ENCODE measurements at regions of chr7 and their contacts with region 1.

Region 1: GRCh38 chr7:25028370-25029021 is 48.5 kb upstream of the OSBPL3 start:
- DNase-seq: peak; percentile 66 to 99
- H3K4me3 ChIP-seq: peak overlapping the region; percentile 2; the same call in 1 of the 2 replicates
- H3K27ac ChIP-seq: peak overlapping the region; percentile 87
- H3K4me1 ChIP-seq: peaks cover 88% of the 10 kb centered on the region
- H3K27me3 ChIP-seq: no peaks in the 10 kb centered on the region
- CTCF ChIP-seq: no peak

Region 2: GRCh38 chr7:24819916-24820689 is 208.4 kb before region 1 on chr7:
- CTCF ChIA-PET with region 1: interaction called, 11 read pairs
- POLR2A ChIA-PET with region 1: interaction called, 4 read pairs
- intact Hi-C with region 1: loop called (anchors 1 kb)
- DNase-seq: peak; percentile 77 to 81
- H3K4me3 ChIP-seq: peak overlapping the region; percentile 22; the same call in 1 of the 2 replicates
- H3K27ac ChIP-seq: peak overlapping the region; percentile 97
- H3K4me1 ChIP-seq: peaks cover 47% of the 10 kb centered on the region
- H3K27me3 ChIP-seq: no peaks in the 10 kb centered on the region
- CTCF ChIP-seq: peak; percentile 99

Region 3: GRCh38 chr7:24907311-24907886 is 121.1 kb before region 1 on chr7:
- CTCF ChIA-PET with region 1: no interaction called
- POLR2A ChIA-PET with region 1: no interaction called
- intact Hi-C with region 1: loop called (anchors 2 kb)
- DNase-seq: peak; percentile 47 to 88
- H3K4me3 ChIP-seq: peak overlapping the region; percentile 21
- H3K27ac ChIP-seq: peak overlapping the region; percentile 86
- H3K4me1 ChIP-seq: peaks cover 58% of the 10 kb centered on the region
- H3K27me3 ChIP-seq: no peaks in the 10 kb centered on the region
- CTCF ChIP-seq: no peak

Region 4: DNA sequence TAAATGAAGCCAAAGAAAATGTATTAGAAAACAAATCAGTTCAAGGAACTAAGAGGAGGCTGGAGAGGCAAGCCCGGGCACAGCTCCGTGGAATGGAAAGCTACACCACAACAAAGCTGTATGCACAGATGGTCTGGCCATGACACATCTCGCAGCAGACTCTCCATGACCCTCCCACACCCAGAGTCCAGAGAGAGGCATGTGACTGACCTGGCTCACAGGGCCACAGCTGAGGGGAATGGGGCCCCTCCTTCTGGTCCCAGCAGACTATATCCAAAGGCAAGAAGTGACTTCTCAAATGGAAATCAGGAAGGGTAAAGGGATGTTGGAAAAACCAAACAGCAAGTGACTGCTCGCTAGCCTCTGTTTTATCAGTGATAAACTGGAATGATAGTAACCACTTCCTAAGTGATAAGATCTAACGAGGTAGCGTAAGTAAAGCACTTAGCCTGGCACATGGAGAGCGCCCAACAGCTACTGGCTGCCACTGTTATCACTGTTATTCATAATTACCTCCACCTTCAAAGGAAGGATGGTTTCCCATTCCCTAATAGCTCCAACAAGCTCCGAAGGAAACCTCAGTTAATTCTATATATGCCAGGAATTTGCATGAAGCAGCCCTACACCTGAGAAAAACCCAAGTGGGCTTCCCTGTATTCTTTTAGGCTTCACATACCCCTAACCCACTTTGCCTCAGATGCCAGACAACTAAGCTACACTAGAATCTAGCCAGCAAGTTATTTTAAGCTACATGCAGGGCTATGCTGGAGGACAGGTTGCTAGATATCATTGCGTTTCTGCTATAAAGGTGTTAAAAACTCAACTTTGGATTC is 56.9 kb before region 1 on chr7:
- CTCF ChIA-PET with region 1: no interaction called
- POLR2A ChIA-PET with region 1: interaction called, 3 read pairs
- intact Hi-C with region 1: loop called (anchors 2 kb)
- DNase-seq: peak; percentile 76 to 85
- H3K4me3 ChIP-seq: no peak overlapping the region
- H3K27ac ChIP-seq: peak overlapping the region; percentile 10; the same call in 1 of the 2 replicates
- H3K4me1 ChIP-seq: peaks cover 57% of the 10 kb centered on the region
- H3K27me3 ChIP-seq: no peaks in the 10 kb centered on the region
- CTCF ChIP-seq: no peak

Region 5: GRCh38 chr7:25069900-25070443 is 41.5 kb after region 1 on chr7:
- CTCF ChIA-PET with region 1: interaction called, 6 read pairs
- POLR2A ChIA-PET with region 1: interaction called, 10 read pairs
- intact Hi-C with region 1: loop called (anchors 1 kb)
- DNase-seq: peak; percentile 67 to 76
- H3K4me3 ChIP-seq: no peak overlapping the region
- H3K27ac ChIP-seq: no peak overlapping the region
- H3K4me1 ChIP-seq: peaks cover 5% of the 10 kb centered on the region
- H3K27me3 ChIP-seq: no peaks in the 10 kb centered on the region
- CTCF ChIP-seq: peak; percentile 96

Region 6: DNA sequence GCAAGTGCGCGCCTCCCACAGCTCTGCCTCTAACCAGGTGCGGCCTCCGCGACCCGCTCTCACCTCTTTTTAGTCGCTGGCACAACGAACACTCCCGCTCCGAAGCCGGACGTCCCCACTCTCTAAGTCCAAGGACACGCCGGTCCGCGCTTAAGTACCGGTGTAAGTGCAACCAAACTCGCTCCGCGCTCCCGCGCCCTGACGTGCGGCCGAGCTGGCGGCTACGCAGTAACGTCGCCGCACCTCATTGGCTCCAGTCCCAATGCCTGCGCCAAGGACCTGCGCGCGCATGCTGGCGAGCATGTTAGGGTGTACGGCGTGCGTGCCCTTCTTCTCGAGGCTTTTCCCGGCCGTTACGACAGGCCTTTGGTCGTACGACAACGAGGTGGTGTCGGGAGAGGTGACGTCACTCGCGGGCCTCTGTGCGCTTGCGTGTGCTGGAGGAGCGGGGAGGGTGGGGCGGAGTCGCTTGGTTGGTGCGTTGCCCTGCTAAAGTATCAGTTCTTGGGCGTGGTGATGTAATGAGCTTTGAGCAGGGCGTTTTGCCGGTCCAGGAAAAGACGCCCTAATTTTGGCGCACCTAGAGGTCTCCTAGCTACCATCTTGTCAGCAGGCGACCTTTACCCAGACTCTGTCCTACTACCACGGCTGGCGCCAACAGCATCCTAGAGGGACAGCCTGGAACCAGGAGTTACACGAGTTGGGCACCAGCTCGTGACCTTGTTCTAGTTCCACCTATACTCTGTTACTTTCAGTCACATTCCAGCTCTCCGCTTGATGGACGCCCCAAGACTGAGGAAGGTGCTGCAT is 96.8 kb after region 1 on chr7 and contains the start of gene CYCS:
- CTCF ChIA-PET with region 1: no interaction called
- POLR2A ChIA-PET with region 1: interaction called, 11 read pairs
- intact Hi-C with region 1: no loop called
- DNase-seq: peak; percentile 100
- H3K4me3 ChIP-seq: peak within 1 kb of the TSS; percentile 66
- H3K27ac ChIP-seq: peak within 1 kb of the TSS; percentile 66
- H3K4me1 ChIP-seq: peaks cover 21% of the 10 kb centered on the region; the same call in 1 of the 2 replicates
- H3K27me3 ChIP-seq: peaks cover 21% of the 10 kb centered on the region
- CTCF ChIP-seq: no peak
- total RNA-seq, gene CYCS: 101 and 120 TPM in 2 replicates